Aorta (tissue), 5 donors: ENCODE measurements at regions of chr14 and their contacts with region 1.

Region 1: GRCh38 chr14:94485944-94486841 is 10.2 kb upstream of the SERPINA9 start:
- DNase-seq: peak; percentile 53 to 84
- ATAC-seq: peak; percentile 82
- H3K4me3 ChIP-seq: no peak overlapping the region
- H3K27ac ChIP-seq: no peak overlapping the region
- H3K4me1 ChIP-seq: no peaks in the 10 kb centered on the region
- H3K27me3 ChIP-seq: no peaks in the 10 kb centered on the region

Region 2: DNA sequence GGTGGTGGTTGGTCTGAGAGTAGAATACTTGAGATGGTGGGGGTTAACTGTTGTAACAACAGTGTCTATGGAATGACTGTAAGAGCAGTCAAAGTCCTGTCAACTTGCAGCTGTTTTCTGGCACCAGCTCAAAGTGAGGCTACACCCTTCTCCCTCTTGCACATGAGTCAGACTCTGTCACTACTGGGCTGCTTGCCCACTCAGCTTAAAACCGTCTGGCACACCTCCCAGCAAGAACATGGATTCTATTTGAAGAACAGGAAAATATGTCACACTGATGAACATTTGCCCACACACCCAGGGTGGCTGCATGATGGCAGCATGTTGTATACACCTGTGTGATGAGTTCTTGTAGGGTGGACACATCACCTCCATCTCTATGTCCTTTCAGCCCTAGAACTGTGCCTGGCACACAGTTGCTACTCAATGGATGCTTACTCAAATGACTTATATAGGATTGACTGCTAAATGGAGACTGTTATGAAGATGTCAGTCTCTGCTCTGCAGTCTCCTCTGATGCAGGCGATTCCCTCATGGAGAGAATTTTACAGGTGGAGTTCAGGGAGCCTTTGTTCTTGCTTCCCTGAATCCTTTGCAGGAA is 143.8 kb before region 1 on chr14:
- intact Hi-C with region 1: no loop called
- DNase-seq: peak; percentile 90 to 94
- ATAC-seq: peak; percentile 81
- H3K4me3 ChIP-seq: no peak overlapping the region
- H3K27ac ChIP-seq: no peak overlapping the region
- H3K4me1 ChIP-seq: no peaks in the 10 kb centered on the region
- H3K27me3 ChIP-seq: no peaks in the 10 kb centered on the region

Region 3: GRCh38 chr14:94355191-94355797 is 130.9 kb before region 1 on chr14:
- intact Hi-C with region 1: loop called (anchors 10 kb)
- DNase-seq: peak; percentile 69 to 80
- ATAC-seq: no peak
- H3K4me3 ChIP-seq: no peak overlapping the region
- H3K27ac ChIP-seq: no peak overlapping the region
- H3K4me1 ChIP-seq: no peaks in the 10 kb centered on the region
- H3K27me3 ChIP-seq: peaks cover 0 to 2% of the 10 kb centered on the region in 2 donors

Region 4: DNA sequence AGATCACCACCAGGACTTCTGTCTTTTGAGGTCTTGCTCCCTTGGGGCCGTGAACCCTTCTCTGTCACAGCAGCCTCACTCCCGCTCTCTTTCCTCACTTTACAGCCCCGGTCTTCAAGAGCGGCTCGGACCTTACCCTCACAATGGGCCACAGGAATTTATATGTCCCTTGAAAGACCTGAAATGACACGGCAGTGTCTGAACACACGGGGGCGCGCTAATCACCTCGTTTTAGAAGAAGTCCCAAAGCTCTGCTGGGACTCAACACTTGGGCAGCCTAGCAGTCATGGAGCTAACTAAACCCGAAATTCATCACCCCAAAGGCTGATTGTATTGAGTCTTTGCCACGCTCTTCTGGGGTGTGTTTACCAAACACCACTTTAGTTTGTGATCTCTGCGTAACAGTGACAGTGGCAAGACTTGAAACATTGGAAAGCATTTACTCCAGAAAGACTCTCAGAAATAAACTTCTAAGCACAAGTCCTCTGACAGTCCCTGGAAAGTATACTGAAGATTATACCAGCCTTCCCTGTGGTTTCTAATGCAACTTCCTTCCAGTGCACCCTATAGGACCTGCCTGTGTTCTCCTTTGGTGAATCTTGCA is 62.6 kb before region 1 on chr14:
- intact Hi-C with region 1: loop called in 1 of 2 experiments (anchors 5 kb)
- DNase-seq: peak; percentile 79 to 87
- ATAC-seq: no peak
- H3K4me3 ChIP-seq: no peak overlapping the region
- H3K27ac ChIP-seq: no peak overlapping the region
- H3K4me1 ChIP-seq: no peaks in the 10 kb centered on the region
- H3K27me3 ChIP-seq: no peaks in the 10 kb centered on the region

Region 5: GRCh38 chr14:94548999-94549985 is 63.1 kb after region 1 on chr14:
- intact Hi-C with region 1: no loop called
- DNase-seq: peak in 1 of 2 donors; percentile 87
- ATAC-seq: peak; percentile 72
- H3K4me3 ChIP-seq: no peak overlapping the region
- H3K27ac ChIP-seq: no peak overlapping the region
- H3K4me1 ChIP-seq: no peaks in the 10 kb centered on the region
- H3K27me3 ChIP-seq: no peaks in the 10 kb centered on the region